ENCODE measurements at regions of chr9 and their contacts with region 1.

Region 1: DNA sequence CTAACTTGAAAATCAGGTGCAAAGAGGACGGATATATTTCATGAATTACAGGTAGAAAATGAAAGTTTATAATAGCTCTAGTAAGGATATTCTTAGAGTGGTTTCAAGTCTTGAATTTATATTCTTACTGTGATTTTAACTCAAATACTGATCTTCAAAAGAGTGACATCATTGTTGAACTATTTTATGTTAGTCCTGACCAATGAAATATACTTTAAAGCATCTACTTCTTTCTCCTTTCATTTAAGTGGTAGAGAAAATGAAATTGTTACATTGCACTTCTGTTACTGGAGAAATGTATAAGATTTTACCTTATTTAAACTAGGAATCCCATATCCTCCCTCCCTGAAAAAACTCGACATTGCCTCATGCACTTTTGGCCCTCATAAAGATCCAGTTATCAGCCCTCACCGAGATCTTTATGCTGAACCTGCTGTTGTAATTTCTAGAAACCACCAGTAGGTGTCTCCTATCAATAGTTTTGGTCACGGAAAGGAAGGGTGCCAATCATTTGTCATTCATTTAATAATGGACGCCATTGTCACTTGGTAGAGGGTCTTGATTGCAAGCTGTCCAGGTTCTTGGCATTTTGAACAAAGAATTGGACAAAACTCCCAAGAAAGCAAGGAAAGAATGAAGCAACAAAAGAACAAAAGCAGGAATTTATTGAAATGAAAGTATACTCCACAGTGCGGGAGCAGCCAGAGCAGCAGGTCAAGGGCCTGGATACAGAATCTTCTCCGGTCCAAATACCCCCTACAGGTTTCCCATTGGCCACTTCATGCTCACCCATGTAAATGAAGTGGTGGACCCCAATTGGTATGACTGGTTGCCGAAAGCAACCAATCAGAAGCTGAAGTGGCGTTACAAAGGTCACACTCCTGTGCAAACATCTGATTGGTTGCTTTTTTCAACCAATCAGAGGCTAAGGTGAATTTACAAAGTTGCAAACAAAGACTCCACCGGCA is 524.2 kb downstream of the PSAT1 start:
- DNase-seq: peak; percentile 20 to 52
- ATAC-seq: peak; percentile 50 to 69; a peak in 4 of 6 replicates
- H3K4me3 ChIP-seq: no peak overlapping the region
- H3K27ac ChIP-seq: peak overlapping the region; percentile 10 to 70; a peak in 3 of 6 replicates
- H3K4me1 ChIP-seq: no peaks in the 10 kb centered on the region
- CTCF ChIP-seq: peak; percentile 59
- EP300 ChIP-seq: no peak
- POLR2A ChIP-seq: no peak
- RAD21 ChIP-seq: peak; percentile 55 to 62; a peak in 4 of 5 replicates

Region 2: GRCh38 chr9:78668148-78668825 is 152.9 kb before region 1 on chr9:
- CTCF ChIA-PET with region 1: no interaction called
- POLR2A ChIA-PET with region 1: no interaction called
- DNase-seq: no peak
- ATAC-seq: no peak
- H3K4me3 ChIP-seq: no peak overlapping the region
- H3K27ac ChIP-seq: peak overlapping the region in 1 of 2 experiments; percentile 17; a peak in 1 of 6 replicates
- H3K4me1 ChIP-seq: peaks cover 6% of the 10 kb centered on the region; the same call in 1 of the 3 replicates
- CTCF ChIP-seq: no peak
- EP300 ChIP-seq: no peak
- POLR2A ChIP-seq: no peak
- RAD21 ChIP-seq: no peak

Region 3: DNA sequence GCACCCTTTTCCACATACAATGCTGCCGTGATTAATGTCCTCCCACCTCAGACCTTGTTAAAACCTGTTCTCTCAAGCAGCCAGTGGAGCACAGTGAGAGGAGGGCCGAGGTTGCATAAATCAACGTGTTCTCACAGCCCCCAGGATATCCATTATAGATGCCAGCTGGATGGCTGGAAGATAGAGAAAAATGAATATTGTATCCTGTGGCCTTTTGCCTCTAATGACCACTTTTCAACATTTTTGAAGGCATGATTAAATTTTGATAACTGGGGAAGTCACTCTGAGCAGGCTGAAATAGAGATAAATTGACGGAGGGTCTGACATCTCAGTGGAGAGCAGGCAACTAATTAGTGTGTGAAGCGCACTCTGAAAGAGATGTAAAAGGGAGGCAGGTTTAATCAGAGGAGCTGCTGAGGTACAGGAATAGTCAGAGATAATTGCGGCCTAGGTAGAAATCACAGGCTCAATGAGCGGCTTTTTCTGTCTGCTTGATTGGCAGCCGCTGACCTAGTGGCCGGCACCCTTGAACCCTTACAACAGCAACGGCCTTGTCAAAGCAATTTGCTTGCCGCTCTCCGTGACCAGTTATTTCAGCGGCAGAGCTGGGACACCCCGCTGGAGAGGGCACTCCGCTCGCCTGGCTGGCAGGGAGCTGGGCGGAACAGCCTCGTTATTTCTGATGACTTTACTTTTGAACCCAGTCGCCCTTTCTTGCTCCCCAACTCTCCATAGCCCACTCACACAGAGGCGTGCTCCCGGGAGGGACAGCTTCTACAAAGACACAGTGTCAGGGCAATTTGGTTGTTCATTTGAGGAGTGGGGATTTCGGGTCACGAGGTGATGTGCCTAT is 36.5 kb after region 1 on chr9:
- CTCF ChIA-PET with region 1: interaction called, 12 read pairs
- POLR2A ChIA-PET with region 1: no interaction called
- DNase-seq: no peak
- ATAC-seq: no peak
- H3K4me3 ChIP-seq: no peak overlapping the region
- H3K27ac ChIP-seq: peak overlapping the region in 1 of 2 experiments; percentile 50; a peak in 3 of 6 replicates
- H3K4me1 ChIP-seq: no peaks in the 10 kb centered on the region
- CTCF ChIP-seq: no peak
- EP300 ChIP-seq: no peak
- POLR2A ChIP-seq: no peak
- RAD21 ChIP-seq: no peak

Measured in A549 (cell line).